Panc1 (cell line): ENCODE measurements at regions of chr1 and their contacts with region 1.

Region 1: DNA sequence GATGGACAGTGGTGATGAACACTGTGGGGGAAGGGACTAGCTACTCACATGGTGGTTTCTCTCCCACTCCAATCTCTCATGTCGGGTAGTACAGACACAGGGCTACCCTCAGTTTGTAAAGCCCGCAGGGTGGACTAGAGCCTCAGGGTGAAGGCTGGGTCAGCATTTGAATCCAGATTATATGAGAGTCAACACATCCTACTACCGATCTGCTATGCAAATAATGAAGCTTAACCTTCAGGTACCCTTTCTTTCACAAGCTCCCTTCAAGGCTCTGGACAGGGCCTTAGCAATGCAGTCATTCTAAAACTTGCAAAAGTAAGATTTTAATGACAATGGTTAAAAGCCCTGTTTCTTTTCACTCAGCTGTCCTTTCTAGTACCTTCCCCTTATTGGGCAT is 5.5 kb upstream of the ZBED6 start:
- DNase-seq: no peak
- ATAC-seq: no peak
- H3K4me3 ChIP-seq: no peak overlapping the region
- H3K27ac ChIP-seq: no peak overlapping the region
- H3K4me1 ChIP-seq: no peaks in the 10 kb centered on the region
- H3K27me3 ChIP-seq: no peaks in the 10 kb centered on the region
- CTCF ChIP-seq: no peak

Region 2: GRCh38 chr1:203661572-203661971 is 128.4 kb before region 1 on chr1:
- CTCF ChIA-PET with region 1: no interaction called
- POLR2A ChIA-PET with region 1: no interaction called
- in situ Hi-C with region 1: no loop called
- intact Hi-C with region 1: no loop called
- DNase-seq: no peak
- ATAC-seq: no peak
- H3K4me3 ChIP-seq: no peak overlapping the region
- H3K27ac ChIP-seq: no peak overlapping the region
- H3K4me1 ChIP-seq: no peaks in the 10 kb centered on the region
- H3K27me3 ChIP-seq: no peaks in the 10 kb centered on the region
- CTCF ChIP-seq: no peak

Region 3: GRCh38 chr1:203823306-203823705 is 33.4 kb after region 1 on chr1:
- CTCF ChIA-PET with region 1: no interaction called
- POLR2A ChIA-PET with region 1: interaction called, 14 read pairs
- in situ Hi-C with region 1: no loop called
- intact Hi-C with region 1: no loop called
- DNase-seq: no peak
- ATAC-seq: no peak
- H3K4me3 ChIP-seq: no peak overlapping the region
- H3K27ac ChIP-seq: no peak overlapping the region
- H3K4me1 ChIP-seq: no peaks in the 10 kb centered on the region
- H3K27me3 ChIP-seq: no peaks in the 10 kb centered on the region
- CTCF ChIP-seq: no peak

Region 4: DNA sequence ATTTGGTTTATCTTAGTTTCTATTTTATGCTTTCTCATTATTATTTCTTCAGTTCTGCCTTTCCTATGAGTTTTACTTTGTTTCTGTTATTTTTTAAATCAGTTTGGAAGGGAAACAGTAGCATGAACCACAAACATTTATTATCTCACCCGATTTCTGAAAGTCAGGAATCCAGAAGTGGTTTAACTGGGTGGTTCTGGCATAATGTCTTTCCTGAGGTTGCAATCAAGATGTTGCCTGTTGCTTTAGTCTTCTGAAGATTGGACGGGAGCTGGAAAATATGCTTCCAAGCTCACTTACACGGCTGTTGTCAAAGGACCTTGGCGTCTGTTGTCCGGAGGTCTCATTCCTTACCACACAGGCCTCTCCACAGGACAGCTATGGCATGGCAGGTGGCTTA is 121.8 kb after region 1 on chr1:
- CTCF ChIA-PET with region 1: no interaction called
- POLR2A ChIA-PET with region 1: no interaction called
- in situ Hi-C with region 1: no loop called
- intact Hi-C with region 1: no loop called
- DNase-seq: no peak
- ATAC-seq: no peak
- H3K4me3 ChIP-seq: no peak overlapping the region
- H3K27ac ChIP-seq: no peak overlapping the region
- H3K4me1 ChIP-seq: peaks cover 6% of the 10 kb centered on the region
- H3K27me3 ChIP-seq: no peaks in the 10 kb centered on the region
- CTCF ChIP-seq: no peak